ENCODE measurements at regions of chr18 and their contacts with region 1.

Region 1: DNA sequence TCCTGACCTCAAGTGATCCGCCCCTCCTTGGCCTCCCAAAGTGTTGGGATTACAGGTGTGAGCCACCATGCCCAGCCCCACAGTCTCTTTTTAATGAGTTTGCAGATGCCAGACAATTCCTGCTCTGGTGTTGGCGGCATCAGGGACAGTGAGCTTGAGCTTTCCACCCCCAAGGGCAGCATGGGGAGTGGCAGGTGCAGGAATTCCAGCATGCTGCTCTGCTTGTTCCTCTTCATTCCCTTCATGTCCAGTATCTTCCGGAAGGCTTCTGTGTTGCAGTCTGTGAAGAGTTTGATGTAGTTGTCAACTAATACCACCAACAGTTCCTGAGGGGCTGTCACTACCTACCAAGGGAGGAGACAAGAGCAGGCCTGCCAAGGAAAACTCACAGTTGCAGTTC is 137.3 kb downstream of the SS18 start:
- DNase-seq: no peak

Region 2: DNA sequence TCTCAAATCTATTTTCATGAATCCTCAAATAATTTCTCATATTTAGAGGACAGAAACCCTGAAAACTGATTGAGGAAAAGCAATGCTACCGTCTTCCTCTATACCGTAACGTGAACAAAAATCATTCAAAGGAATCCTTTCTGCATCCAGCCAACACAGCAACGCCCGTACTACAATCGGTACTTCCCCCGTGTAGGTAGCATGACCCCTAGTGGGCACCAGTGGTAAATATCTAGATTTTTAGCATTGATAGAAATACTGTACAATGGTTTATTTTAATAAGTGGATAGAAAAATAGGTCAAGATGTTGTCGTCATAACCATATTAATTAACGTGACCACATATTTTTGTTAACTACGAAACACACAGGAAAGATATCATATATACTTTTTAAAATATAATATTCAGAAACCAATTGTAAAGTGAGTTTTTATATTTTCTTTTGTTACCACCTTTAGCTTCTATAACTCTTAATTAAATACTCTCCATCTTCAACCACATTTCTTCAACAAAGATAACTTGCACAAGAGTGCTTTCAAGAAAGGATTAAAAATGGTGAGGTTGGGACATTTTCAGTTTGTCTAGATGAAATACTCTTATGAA is 56.8 kb before region 1 on chr18:
- intact Hi-C with region 1: loop called (anchors 10 kb)
- DNase-seq: peak in 23 of 42 donors; percentile 6 to 66 (median 36)

Region 3: DNA sequence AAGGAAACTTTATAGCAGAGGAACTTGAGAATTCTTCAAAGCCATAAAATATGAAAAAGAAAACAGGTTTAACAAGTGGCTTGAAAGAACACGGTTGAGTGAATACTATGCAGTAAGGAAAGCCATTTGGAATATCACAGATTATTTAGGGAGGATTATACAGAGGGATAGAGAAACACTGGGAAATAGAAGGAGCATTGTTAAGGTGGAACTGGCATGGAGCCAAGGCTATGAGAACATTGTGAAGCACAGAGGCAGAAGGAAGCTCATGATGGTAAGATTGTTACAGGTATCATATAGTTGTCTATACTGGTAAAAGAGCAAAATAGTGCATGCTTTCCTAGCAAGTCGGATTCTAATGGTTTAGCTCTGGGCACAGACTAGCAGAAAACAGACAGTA is 50.2 kb after region 1 on chr18:
- intact Hi-C with region 1: no loop called
- DNase-seq: peak in 7 of 42 donors; percentile 12 to 60 (median 19)

Region 4: DNA sequence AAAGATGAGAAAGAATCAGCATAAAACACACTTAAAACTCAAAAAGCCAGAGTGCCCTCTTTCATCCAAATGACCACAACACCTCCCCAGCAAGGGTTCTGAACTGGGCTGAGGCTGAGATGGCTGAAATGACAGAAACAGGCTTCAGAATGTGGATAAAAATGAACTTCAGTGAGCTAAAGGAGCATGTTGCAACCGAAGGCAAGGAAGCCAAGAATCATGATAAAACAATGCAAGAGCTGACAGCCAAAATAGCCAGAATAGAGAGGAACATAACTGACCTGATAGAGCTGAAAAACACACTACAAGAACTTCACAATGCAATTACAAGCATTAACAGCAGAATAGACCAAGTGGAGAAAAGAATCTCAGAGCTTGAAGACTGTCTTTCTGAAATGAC is 168.3 kb after region 1 on chr18:
- intact Hi-C with region 1: no loop called
- DNase-seq: no peak